Left ventricle myocardium inferior (tissue), 1 donor: ENCODE measurements at regions of chr21 and their contacts with region 1.

Region 1: DNA sequence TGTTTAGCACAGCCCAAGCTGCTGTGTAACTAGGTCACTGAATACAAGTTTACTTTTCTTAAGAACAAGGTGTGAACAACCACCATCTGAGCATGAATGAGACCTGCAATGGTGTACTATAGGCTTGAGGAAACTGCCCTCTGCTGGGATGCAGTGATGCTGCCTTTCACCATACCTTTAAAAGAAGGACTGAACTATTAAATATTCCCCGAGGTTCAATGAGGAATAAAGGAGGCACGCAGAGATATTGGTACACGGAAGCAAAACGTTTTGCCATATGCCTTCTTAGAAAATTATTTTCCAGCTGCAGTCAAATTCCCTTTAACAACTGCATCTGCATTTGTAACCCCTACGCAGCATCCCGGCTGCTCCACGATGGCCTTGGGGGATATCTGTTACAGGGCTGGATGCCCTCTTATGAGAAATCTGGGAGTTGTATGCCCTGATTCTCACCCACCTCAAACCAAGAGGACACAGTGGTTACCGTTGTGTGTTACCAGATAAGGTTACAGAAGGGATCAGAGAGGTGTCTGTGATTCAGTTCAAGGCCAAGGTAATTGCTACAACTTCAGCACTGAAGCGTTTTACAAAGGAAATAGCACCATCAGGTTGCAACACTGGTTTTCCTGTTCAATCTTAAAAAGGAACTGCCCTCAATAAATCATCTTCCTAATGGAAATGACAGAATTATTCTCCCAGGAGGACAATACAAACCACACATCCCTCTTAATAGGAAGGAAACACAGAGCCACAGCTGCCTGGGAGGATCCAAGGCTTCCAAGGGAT is 470.5 kb downstream of the LTN1 start:
- DNase-seq: no peak
- H3K4me3 ChIP-seq: no peak overlapping the region
- H3K27ac ChIP-seq: peak overlapping the region; percentile 85
- H3K4me1 ChIP-seq: peaks cover 30% of the 10 kb centered on the region
- H3K27me3 ChIP-seq: no peaks in the 10 kb centered on the region
- CTCF ChIP-seq: peak; percentile 36

Region 2: DNA sequence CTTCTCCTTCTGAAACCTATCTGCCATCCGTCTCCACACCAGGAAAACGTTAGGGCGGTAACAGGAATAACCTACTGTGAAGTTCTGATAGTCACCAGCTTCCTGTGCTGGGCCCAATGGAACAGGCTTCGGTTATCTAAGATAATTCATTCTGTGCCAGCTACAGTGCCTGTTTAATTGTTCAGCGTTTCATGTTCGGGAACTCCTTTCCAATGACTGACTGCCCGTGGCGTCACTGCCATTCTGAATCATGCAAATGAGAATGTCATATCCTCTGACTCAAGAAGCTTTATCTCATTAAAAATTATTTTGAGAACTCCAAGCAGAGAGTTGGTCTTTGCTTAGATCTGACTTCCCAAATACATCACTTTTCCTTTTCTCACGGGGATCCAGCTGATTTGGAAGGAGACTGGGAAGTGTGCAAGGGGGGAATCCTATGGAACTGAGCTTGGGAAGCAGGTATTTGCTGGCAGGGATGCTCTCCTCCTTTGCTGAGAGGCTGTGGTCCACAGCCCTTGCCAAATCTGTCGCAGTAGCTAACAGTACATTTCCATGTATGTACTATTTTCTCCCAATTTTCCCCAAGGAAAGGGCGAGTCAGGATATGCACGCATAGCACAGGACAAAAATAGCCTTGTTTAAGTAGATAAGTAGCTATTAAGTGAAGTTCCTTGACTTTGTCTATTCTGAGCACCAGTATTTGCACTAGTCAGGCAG is 111.8 kb after region 1 on chr21:
- intact Hi-C with region 1: loop called (anchors 10 kb)
- DNase-seq: peak; percentile 29
- H3K4me3 ChIP-seq: no peak overlapping the region
- H3K27ac ChIP-seq: peak overlapping the region; percentile 83
- H3K4me1 ChIP-seq: peaks cover 46% of the 10 kb centered on the region
- H3K27me3 ChIP-seq: no peaks in the 10 kb centered on the region
- CTCF ChIP-seq: no peak